ENCODE measurements at regions of chr6 and their contacts with region 1.

Region 1: DNA sequence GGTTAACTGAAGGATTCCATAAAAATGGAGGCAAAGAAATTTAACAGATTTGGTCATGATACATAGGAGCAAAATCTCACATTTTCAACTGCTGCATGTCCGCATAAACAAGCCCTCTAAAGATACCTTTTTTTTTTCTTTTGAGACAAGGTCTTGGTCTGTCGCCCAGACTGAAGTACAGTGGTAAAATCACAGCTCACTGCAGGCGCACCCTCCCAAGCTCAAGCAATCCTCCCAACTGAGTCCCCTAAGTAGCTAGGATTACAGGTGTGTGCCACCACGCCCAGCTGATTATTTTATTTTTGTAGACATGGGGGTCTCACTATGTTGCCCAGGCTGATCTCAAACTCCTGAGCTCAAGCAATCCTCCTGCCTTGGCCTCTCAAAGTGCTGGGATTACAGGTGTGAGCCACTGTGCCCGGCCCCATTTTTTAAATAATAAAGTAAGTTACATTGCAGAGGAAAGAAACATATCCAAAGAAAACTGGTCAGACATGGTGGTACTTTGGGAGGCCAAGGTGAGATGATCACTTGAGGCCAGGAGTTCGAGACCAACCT is 13.7 kb downstream of the MDN1 start:
- DNase-seq: no peak
- ATAC-seq: no peak
- H3K4me3 Mint-ChIP-seq: no peak overlapping the region
- H3K27ac Mint-ChIP-seq: no peak overlapping the region
- H3K4me1 Mint-ChIP-seq: peaks cover 9% of the 10 kb centered on the region
- H3K27me3 Mint-ChIP-seq: no peaks in the 10 kb centered on the region

Region 2: GRCh38 chr6:89729818-89730217 is 76.1 kb before region 1 on chr6:
- CTCF ChIA-PET with region 1: no interaction called
- POLR2A ChIA-PET with region 1: no interaction called
- DNase-seq: no peak
- ATAC-seq: no peak
- H3K4me3 Mint-ChIP-seq: no peak overlapping the region
- H3K27ac Mint-ChIP-seq: no peak overlapping the region
- H3K4me1 Mint-ChIP-seq: no peaks in the 10 kb centered on the region
- H3K27me3 Mint-ChIP-seq: no peaks in the 10 kb centered on the region

Region 3: DNA sequence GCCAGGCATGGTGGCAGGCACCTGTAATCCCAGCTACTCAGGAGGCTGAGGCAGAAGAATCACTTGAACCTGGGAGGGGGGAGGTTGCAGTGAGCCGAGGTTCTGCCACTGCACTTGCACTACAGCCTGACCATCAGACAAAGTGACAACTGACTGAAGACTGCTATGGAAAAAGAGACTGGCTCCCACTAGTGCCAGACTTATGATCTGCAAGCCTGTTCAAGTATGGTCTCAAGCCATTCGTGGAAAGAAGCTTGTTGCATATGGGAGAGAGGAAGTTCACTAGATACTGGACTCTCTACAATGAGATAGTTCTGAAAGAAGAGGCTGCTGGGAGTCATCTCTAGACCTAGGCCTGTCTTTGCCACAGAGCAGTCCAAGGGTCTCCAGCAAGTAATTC is 13.0 kb before region 1 on chr6:
- CTCF ChIA-PET with region 1: interaction called, 18 read pairs
- POLR2A ChIA-PET with region 1: no interaction called
- DNase-seq: peak; percentile 56
- ATAC-seq: peak; percentile 72
- H3K4me3 Mint-ChIP-seq: peak overlapping the region; percentile 22
- H3K27ac Mint-ChIP-seq: peak overlapping the region; percentile 92
- H3K4me1 Mint-ChIP-seq: peaks cover 40% of the 10 kb centered on the region
- H3K27me3 Mint-ChIP-seq: no peaks in the 10 kb centered on the region

Region 4: GRCh38 chr6:89970609-89971337 is 164.9 kb after region 1 on chr6:
- CTCF ChIA-PET with region 1: no interaction called
- POLR2A ChIA-PET with region 1: no interaction called
- DNase-seq: no peak
- ATAC-seq: no peak
- H3K4me3 Mint-ChIP-seq: no peak overlapping the region
- H3K27ac Mint-ChIP-seq: no peak overlapping the region
- H3K4me1 Mint-ChIP-seq: peaks cover 29% of the 10 kb centered on the region
- H3K27me3 Mint-ChIP-seq: no peaks in the 10 kb centered on the region